ENCODE measurements at regions of chr12 and their contacts with region 1.

Region 1: GRCh38 chr12:67025543-67026114 is 243.5 kb upstream of the CAND1 start:
- DNase-seq: peak; percentile 67
- H3K4me3 Mint-ChIP-seq: no peak overlapping the region
- H3K27ac Mint-ChIP-seq: no peak overlapping the region
- H3K4me1 Mint-ChIP-seq: peaks cover 3% of the 10 kb centered on the region
- H3K27me3 Mint-ChIP-seq: no peaks in the 10 kb centered on the region

Region 2: GRCh38 chr12:67220065-67220464 is 194.4 kb after region 1 on chr12:
- CTCF ChIA-PET with region 1: interaction called, 3 read pairs
- intact Hi-C with region 1: loop called (anchors 1 kb)
- DNase-seq: peak; percentile 13
- H3K4me3 Mint-ChIP-seq: no peak overlapping the region
- H3K27ac Mint-ChIP-seq: no peak overlapping the region
- H3K4me1 Mint-ChIP-seq: no peaks in the 10 kb centered on the region
- H3K27me3 Mint-ChIP-seq: no peaks in the 10 kb centered on the region

Measured in activated naive CD4-positive, alpha-beta T cell treated with anti-CD3 and anti-CD28 coated beads for 36 hours (primary cell).